ENCODE measurements at regions of chr17 and their contacts with region 1.

Region 1: DNA sequence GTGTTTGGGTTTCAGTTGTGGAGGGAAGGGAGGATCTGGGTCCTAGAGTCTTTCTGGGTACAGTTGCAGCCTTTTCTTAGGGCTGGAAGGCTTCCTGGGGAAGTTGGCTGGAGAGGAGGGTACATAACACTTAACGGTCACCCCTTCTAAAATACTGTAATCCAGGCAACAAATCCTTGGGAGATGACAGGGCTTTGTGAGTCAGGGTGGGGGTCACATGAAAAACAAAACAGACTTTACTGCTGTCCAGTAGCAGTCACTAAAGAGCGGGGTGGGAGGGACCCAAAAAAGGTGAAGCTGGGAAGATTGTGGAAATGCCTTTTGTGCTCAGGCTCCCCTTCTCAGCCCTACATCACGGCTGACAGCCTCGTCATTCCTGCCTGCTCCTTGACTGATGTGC is 6.3 kb downstream of the SAP30BP start:
- DNase-seq: no peak
- H3K4me3 ChIP-seq: no peak overlapping the region
- H3K27ac ChIP-seq: no peak overlapping the region
- H3K4me1 ChIP-seq: peaks cover under 1% of the 10 kb centered on the region in 2 experiments; a peak in 3 of 4 replicates
- H3K27me3 ChIP-seq: no peaks in the 10 kb centered on the region
- CTCF ChIP-seq: no peak
- EP300 ChIP-seq: no peak
- RAD21 ChIP-seq: no peak

Region 2: DNA sequence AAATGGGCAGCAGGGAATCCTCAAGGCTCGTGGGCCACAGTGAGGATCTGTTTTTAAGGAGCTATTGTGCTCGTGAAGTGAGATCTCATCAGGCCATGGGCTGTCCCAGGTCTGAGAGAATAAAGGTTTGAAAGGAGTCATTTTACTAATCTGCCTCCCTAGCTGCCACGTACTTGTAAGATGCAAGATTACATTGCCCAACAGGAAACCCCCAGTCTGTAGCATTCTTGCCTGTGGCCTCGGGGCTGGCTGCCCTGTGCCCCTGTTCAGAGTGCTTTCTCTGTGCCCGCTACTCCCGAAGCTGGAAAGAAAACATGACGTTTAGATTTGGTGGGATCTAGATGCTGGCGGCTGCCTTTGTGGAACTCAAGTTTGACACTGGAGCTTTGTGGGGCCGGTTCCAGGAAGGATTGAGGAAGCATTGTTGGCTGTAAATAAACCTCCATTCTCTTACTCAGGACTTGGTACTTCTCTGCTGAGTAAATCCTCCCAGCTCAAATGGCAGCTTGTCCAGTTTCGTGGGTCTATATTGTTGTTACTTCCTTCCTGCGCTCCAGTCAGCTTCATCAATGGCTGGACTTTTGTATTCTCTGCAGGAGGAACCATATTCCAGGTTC is 14.8 kb after region 1 on chr17:
- CTCF ChIA-PET with region 1: interaction called, 69 read pairs
- POLR2A ChIA-PET with region 1: no interaction called
- DNase-seq: no peak
- H3K4me3 ChIP-seq: no peak overlapping the region
- H3K27ac ChIP-seq: no peak overlapping the region
- H3K4me1 ChIP-seq: peaks cover 25 to 64% of the 10 kb centered on the region in 2 experiments; a peak in 3 of 4 replicates
- H3K27me3 ChIP-seq: no peaks in the 10 kb centered on the region
- CTCF ChIP-seq: no peak
- EP300 ChIP-seq: no peak
- RAD21 ChIP-seq: no peak

Region 3: GRCh38 chr17:75693500-75694481 is 20.3 kb after region 1 on chr17:
- CTCF ChIA-PET with region 1: interaction called, 69 read pairs
- POLR2A ChIA-PET with region 1: no interaction called
- DNase-seq: peak; percentile 85
- H3K4me3 ChIP-seq: peak overlapping the region in 1 of 2 experiments; percentile 16; a peak in 2 of 4 replicates
- H3K27ac ChIP-seq: peak overlapping the region; percentile 91 to 99
- H3K4me1 ChIP-seq: peaks cover 45 to 62% of the 10 kb centered on the region in 2 experiments; a peak in 3 of 4 replicates
- H3K27me3 ChIP-seq: no peaks in the 10 kb centered on the region
- CTCF ChIP-seq: peak; percentile 53
- EP300 ChIP-seq: peak; percentile 48 to 87; a peak in 2 of 4 replicates
- RAD21 ChIP-seq: peak; percentile 52

Region 4: DNA sequence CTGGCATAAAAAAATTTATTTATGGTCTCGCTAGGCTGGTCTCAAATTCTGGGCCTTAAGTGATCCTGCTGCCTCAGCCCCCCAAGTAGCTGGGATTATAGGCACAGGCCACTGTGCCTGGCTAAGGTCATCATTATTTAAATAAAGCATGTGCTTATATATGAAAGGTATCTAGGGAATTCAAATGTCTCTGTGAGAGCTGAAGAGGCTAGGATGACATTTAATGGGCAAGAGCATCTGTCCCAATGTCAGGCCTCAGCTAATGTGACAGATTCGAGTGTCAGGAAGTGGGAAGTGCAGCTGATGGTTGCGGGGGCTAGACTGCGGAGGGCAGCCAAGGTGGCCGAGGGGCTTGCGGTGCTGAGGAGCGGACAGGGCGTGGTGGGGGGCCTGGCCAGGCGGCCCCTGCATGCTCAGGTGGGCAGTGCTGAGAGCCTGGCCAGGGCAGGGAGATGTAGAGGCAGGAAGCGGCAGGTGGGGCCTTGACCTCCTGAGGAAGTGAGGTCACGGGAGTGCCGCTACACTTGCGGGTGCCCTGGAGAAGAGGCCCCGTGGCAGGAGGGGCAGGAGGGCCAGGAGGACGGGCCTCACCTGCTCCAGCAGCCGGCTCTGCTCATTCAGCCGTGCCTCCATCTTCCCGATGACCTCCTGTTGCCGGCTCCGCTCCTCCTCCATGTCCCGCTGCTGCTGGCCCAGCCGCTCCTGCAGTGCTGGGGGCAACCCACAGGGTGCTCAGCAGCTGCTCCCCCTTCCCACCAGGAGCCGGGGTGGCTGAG is 243.8 kb after region 1 on chr17:
- CTCF ChIA-PET with region 1: no interaction called
- POLR2A ChIA-PET with region 1: no interaction called
- DNase-seq: no peak
- H3K4me3 ChIP-seq: no peak overlapping the region
- H3K27ac ChIP-seq: no peak overlapping the region
- H3K4me1 ChIP-seq: no peaks in the 10 kb centered on the region
- H3K27me3 ChIP-seq: no peaks in the 10 kb centered on the region
- CTCF ChIP-seq: no peak
- EP300 ChIP-seq: no peak
- RAD21 ChIP-seq: no peak

Measured in SK-N-SH (cell line).